CD14-positive monocyte (primary cell): ENCODE measurements at regions of chr16 and their contacts with region 1.

Region 1: DNA sequence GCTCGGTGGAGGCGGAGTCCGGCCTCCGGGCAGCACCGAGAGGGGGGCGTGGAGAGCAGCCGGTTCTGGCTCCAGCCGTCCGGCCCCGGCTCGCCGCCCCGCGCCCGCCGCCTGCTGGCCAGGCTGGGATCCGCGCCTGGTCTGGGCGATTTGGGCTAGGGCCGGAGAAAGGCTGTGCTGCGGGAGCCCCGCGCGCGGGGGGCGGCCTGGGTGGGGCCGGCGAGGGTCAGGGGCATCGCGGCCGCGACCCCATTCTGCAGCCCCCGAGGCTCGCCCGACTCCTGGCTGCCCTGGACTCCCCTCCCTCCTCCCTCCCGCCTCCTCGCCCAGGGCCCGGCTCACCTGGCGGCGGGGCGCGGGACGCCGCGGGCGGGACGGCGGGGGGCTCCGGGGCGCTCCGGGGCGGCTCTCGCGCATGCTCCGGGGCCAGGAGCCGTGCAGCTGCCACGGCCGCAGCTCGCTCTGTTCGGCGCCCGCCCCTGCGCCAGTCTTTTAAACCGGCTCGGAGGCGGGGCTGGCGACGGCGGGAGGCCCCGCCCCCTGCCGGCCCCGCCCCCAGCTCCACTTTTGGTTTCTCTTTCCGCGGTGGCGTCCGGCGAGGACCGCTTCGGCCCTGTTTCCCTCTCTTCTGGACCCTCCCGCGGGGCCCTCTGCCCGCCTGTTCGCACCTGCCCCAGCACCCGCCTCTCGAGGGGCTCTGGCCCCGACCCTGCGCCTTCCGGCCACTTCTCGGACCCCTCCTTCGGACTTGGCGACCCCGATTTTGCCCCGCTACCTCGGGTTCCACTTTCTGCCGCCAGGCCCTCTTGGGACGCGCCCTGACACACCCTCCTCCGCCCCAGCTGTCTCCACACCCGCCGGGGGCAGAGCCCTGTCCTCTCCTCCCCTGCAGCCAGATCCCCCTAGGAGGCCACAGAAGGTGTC is at the start of gene SOCS1:
- DNase-seq: peak; percentile 69 to 80 (median 69)
- H3K4me3 ChIP-seq: peak within 1 kb of the TSS; percentile 69 to 96 (median 86)
- H3K4me3 Mint-ChIP-seq: peak within 1 kb of the TSS; percentile 94 to 96
- H3K27ac ChIP-seq: peak within 1 kb of the TSS; percentile 91 to 92
- H3K27ac Mint-ChIP-seq: peak within 1 kb of the TSS; percentile 95 to 99 (median 97)
- H3K4me1 ChIP-seq: peaks cover 30 to 44% of the 10 kb centered on the region in 2 donors
- H3K4me1 Mint-ChIP-seq: peaks cover 38% of the 10 kb centered on the region
- H3K27me3 ChIP-seq: peaks cover 0 to 23% of the 10 kb centered on the region in 2 donors
- H3K27me3 Mint-ChIP-seq: peaks cover 38 to 71% (median 45%) of the 10 kb centered on the region in 3 donors
- CTCF ChIP-seq: peak; percentile 96
- polyA plus RNA-seq, gene SOCS1: 0.13 to 2.3 (median 0.35) TPM

Region 2: DNA sequence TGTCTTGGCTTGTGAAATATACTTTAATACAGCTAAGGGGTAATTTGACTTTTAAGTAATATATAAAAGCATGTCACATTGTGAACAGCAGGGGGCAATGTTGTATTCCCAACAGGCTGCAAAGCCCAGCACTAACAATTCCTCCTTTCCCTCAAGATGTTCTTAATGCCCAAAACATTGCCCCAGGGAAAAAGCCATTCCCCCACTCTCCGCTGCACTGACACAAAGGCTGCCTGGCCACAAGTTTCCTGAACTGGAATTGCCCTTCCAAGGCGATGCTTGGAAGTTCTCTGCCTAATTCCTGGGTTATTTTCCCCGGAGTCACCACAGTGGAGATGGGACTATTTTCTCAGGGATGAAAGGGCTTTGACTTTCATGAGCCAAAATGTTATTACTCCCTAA is 284.4 kb before region 1 on chr16:
- intact Hi-C with region 1: loop called (anchors 2 to 5 kb)
- DNase-seq: peak; percentile 35 to 55 (median 47)
- H3K4me3 ChIP-seq: no peak overlapping the region
- H3K4me3 Mint-ChIP-seq: no peak overlapping the region
- H3K27ac ChIP-seq: no peak overlapping the region
- H3K27ac Mint-ChIP-seq: no peak overlapping the region
- H3K4me1 ChIP-seq: peaks cover 5 to 8% of the 10 kb centered on the region in 2 donors
- H3K4me1 Mint-ChIP-seq: peaks cover 19% of the 10 kb centered on the region
- H3K27me3 ChIP-seq: no peaks in the 10 kb centered on the region
- H3K27me3 Mint-ChIP-seq: peaks cover 0 to 4% (median 0%) of the 10 kb centered on the region in 3 donors
- CTCF ChIP-seq: peak; percentile 80

Region 3: DNA sequence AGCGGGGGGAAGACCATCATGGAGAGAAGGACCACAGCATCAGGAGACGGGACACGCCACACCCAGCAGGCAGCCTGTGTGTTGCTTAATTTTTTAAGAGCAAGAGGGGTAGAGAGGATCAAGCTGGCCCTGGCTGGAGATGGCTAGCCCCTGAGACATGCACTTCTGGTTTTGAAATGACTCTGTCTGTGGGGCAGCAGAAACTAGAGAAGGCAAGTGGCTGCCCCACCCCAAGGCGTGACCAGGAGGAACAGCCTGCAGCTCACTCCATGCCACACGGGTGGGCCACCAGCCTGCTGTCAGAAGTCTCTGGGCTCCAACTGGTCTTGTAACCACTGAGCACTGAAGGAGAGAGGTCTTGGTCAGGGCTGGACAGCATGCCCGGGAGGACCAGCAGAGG is 75.5 kb before region 1 on chr16:
- intact Hi-C with region 1: loop called in 1 of 2 experiments (anchors 1 kb)
- DNase-seq: peak; percentile 57 to 79 (median 59)
- H3K4me3 ChIP-seq: peak overlapping the region in 1 of 3 experiments; percentile 15
- H3K4me3 Mint-ChIP-seq: peak overlapping the region in 1 of 2 donors; percentile 72
- H3K27ac ChIP-seq: peak overlapping the region; percentile 76 to 81
- H3K27ac Mint-ChIP-seq: peak overlapping the region; percentile 80 to 91 (median 86)
- H3K4me1 ChIP-seq: peaks cover 42 to 45% of the 10 kb centered on the region in 2 donors
- H3K4me1 Mint-ChIP-seq: peaks cover 51% of the 10 kb centered on the region
- H3K27me3 ChIP-seq: no peaks in the 10 kb centered on the region
- H3K27me3 Mint-ChIP-seq: peaks cover 0 to 3% (median 1%) of the 10 kb centered on the region in 3 donors
- CTCF ChIP-seq: no peak

Region 4: GRCh38 chr16:11201498-11202259 is 54.3 kb before region 1 on chr16:
- intact Hi-C with region 1: loop called in 1 of 2 experiments (anchors 10 kb)
- DNase-seq: peak; percentile 72 to 91 (median 79)
- H3K4me3 ChIP-seq: peak overlapping the region in 1 of 3 experiments; percentile 48
- H3K4me3 Mint-ChIP-seq: peak overlapping the region; percentile 50 to 84
- H3K27ac ChIP-seq: peak overlapping the region; percentile 21 to 59
- H3K27ac Mint-ChIP-seq: peak overlapping the region; percentile 74 to 90 (median 88)
- H3K4me1 ChIP-seq: peaks cover 60 to 63% of the 10 kb centered on the region in 2 donors
- H3K4me1 Mint-ChIP-seq: peaks cover 70% of the 10 kb centered on the region
- H3K27me3 ChIP-seq: no peaks in the 10 kb centered on the region
- H3K27me3 Mint-ChIP-seq: peaks cover 0 to 5% (median 4%) of the 10 kb centered on the region in 3 donors
- CTCF ChIP-seq: no peak

Region 5: DNA sequence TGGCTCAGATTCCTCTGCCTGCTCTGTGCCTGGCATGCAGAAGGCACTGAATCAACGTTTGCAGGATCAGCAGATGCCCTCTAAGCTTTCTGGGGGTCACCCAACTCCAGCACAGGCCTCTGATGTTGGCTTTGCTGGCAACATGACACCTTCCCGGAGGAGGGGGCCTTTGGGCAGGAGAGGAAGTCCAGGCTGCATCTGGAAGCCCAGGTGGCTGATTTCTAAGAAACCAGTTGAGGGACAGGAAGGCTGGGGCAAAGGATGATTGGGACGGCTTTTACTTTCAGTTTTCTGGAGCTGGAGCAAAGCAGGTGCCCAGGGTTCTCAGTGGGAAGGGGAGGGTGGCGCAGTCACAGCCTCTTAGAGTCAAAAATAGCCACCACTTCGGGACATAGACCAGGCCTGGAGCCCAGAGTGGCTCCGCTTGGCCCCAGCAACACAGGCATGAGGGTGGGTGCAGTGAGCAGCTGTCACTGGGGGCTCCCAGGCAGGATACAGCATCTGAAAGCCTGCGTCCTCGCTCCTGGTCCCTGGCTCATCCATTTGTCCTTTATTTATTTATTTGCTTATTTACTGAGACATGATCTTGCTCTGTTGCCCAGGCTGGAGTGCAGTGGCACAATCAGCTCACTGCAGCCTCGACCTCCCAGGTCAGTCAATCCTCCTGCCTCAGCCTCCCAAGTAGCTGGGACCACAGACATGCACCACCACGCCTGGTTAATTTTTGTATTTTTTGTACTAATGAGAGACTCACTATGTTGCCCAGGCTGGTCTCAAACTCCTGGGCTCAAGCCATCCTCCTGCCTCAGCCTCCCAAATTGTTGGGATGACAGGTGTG is 15.1 kb before region 1 on chr16:
- intact Hi-C with region 1: no loop called
- DNase-seq: no peak
- H3K4me3 ChIP-seq: no peak overlapping the region
- H3K4me3 Mint-ChIP-seq: no peak overlapping the region
- H3K27ac ChIP-seq: no peak overlapping the region
- H3K27ac Mint-ChIP-seq: no peak overlapping the region
- H3K4me1 ChIP-seq: peaks cover 10 to 16% of the 10 kb centered on the region in 2 donors
- H3K4me1 Mint-ChIP-seq: peaks cover 14% of the 10 kb centered on the region
- H3K27me3 ChIP-seq: no peaks in the 10 kb centered on the region
- H3K27me3 Mint-ChIP-seq: peaks cover 3 to 8% (median 5%) of the 10 kb centered on the region in 3 donors
- CTCF ChIP-seq: no peak

Region 6: DNA sequence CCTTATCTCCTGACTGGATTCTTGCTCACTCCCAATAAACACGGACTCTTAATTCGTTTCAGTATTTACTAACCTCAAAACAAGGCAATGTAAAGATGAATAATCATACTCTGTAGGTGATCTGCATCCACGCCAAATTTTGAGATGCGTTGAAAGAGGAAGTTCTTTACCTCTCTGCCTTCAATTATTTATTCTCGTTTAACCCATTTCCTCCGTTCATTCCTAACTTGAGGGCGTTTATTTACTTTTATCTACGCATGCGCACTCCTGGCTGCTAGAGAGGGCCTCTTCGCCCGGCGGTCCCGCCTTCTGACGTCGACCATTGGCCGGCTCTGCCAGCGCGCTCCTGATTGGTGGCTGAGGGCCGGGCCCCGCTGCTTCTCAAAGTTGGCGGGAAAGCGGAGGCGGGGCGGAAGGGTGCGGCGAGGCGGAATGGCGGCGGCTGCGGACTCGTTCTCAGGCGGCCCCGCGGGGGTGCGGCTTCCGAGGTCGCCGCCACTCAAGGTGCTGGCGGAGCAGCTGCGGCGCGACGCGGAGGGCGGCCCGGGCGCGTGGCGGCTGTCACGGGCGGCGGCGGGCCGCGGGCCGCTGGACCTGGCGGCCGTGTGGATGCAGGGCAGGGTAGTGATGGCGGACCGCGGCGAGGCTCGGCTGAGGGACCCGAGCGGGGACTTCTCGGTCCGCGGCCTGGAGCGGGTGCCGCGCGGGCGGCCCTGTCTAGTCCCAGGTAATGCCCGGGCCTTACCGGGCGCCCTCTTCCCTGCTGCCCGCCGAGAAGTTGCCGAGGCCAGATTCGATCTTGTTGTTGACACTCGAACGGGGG is 89.3 kb after region 1 on chr16 and contains the start of gene RMI2:
- intact Hi-C with region 1: loop called in 1 of 2 experiments (anchors 5 kb)
- DNase-seq: peak; percentile 92 to 95 (median 94)
- H3K4me3 ChIP-seq: peak within 1 kb of the TSS; percentile 33 to 67 (median 50)
- H3K4me3 Mint-ChIP-seq: peak within 1 kb of the TSS; percentile 76 to 82
- H3K27ac ChIP-seq: no peak within 1 kb of the TSS
- H3K27ac Mint-ChIP-seq: peak within 1 kb of the TSS in 2 of 7 donors; percentile 42 to 72
- H3K4me1 ChIP-seq: peaks cover 38 to 51% of the 10 kb centered on the region in 2 donors
- H3K4me1 Mint-ChIP-seq: peaks cover 41% of the 10 kb centered on the region
- H3K27me3 ChIP-seq: no peaks in the 10 kb centered on the region
- H3K27me3 Mint-ChIP-seq: peaks cover 1 to 2% (median 1%) of the 10 kb centered on the region in 3 donors
- CTCF ChIP-seq: no peak
- polyA plus RNA-seq, gene RMI2: 0.17 to 0.24 (median 0.23) TPM

Region 7: GRCh38 chr16:11356573-11357331 is 100.8 kb after region 1 on chr16:
- intact Hi-C with region 1: loop called in 1 of 2 experiments (anchors 5 kb)
- DNase-seq: peak; percentile 47 to 71 (median 68)
- H3K4me3 ChIP-seq: no peak overlapping the region
- H3K4me3 Mint-ChIP-seq: peak overlapping the region in 1 of 2 donors; percentile 81
- H3K27ac ChIP-seq: no peak overlapping the region
- H3K27ac Mint-ChIP-seq: peak overlapping the region in 1 of 7 donors; percentile 66
- H3K4me1 ChIP-seq: peaks cover 23 to 28% of the 10 kb centered on the region in 2 donors
- H3K4me1 Mint-ChIP-seq: peaks cover 35% of the 10 kb centered on the region
- H3K27me3 ChIP-seq: peaks cover 39 to 51% of the 10 kb centered on the region in 2 donors
- H3K27me3 Mint-ChIP-seq: peaks cover 52 to 73% (median 59%) of the 10 kb centered on the region in 3 donors
- CTCF ChIP-seq: peak; percentile 84